ENCODE measurements at regions of chr16 and their contacts with region 1.

Region 1: GRCh38 chr16:75555707-75556430 is at the start of gene TMEM231:
- DNase-seq: peak; percentile 90 to 98 (median 96)
- ATAC-seq: peak; percentile 96 to 98 (median 97)
- H3K4me3 ChIP-seq: peak within 1 kb of the TSS; percentile 61 to 70
- H3K4me3 Mint-ChIP-seq: peak within 1 kb of the TSS; percentile 83 to 89 (median 88)
- H3K27ac ChIP-seq: peak within 1 kb of the TSS; percentile 66
- H3K27ac Mint-ChIP-seq: peak within 1 kb of the TSS; percentile 87 to 89
- H3K4me1 ChIP-seq: peaks cover 3 to 15% of the 10 kb centered on the region in 2 experiments
- H3K4me1 Mint-ChIP-seq: peaks cover 8 to 12% (median 12%) of the 10 kb centered on the region in 3 donors
- H3K27me3 ChIP-seq: peaks cover 0 to 4% of the 10 kb centered on the region in 2 experiments
- H3K27me3 Mint-ChIP-seq: peaks cover 3 to 12% of the 10 kb centered on the region in 2 donors
- total RNA-seq, gene TMEM231: 1.5 to 3.0 (median 2.1) TPM

Region 2: GRCh38 chr16:75519881-75520280 is 36.0 kb before region 1 on chr16:
- CTCF ChIA-PET with region 1: interaction called in 1 of 2 experiments, 22 read pairs
- POLR2A ChIA-PET with region 1: interaction called in 1 of 2 experiments, 4 read pairs
- DNase-seq: no peak
- ATAC-seq: no peak
- H3K4me3 ChIP-seq: no peak overlapping the region
- H3K4me3 Mint-ChIP-seq: no peak overlapping the region
- H3K27ac ChIP-seq: no peak overlapping the region
- H3K27ac Mint-ChIP-seq: no peak overlapping the region
- H3K4me1 ChIP-seq: peaks cover 0 to 14% of the 10 kb centered on the region in 2 experiments
- H3K4me1 Mint-ChIP-seq: peaks cover 11 to 13% (median 12%) of the 10 kb centered on the region in 3 donors
- H3K27me3 ChIP-seq: no peaks in the 10 kb centered on the region
- H3K27me3 Mint-ChIP-seq: no peaks in the 10 kb centered on the region

Region 3: DNA sequence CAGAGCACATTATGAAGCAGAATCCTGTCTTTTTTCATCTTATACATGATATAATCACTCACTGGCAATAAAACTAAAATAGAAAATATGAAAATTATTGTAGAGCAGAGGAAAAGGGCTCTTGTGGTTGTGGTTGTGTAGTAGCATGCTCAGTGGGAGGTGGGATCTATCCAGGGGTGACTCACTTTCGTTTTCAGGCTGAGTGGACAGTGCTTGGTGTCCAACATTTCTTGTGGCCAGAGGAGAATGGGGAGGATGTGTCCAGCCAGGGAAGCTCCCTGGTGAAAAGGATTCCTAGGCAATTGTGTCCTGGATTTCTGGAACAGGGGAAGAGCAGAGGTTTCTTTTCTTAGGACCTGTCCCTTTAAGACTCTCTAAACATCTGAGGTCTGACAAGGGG is 202.3 kb after region 1 on chr16:
- CTCF ChIA-PET with region 1: no interaction called
- POLR2A ChIA-PET with region 1: no interaction called
- DNase-seq: no peak
- ATAC-seq: no peak
- H3K4me3 ChIP-seq: no peak overlapping the region
- H3K4me3 Mint-ChIP-seq: no peak overlapping the region
- H3K27ac ChIP-seq: no peak overlapping the region
- H3K27ac Mint-ChIP-seq: no peak overlapping the region
- H3K4me1 ChIP-seq: no peaks in the 10 kb centered on the region
- H3K4me1 Mint-ChIP-seq: peaks cover 0 to 9% (median 0%) of the 10 kb centered on the region in 3 donors
- H3K27me3 ChIP-seq: peaks cover 0 to 2% of the 10 kb centered on the region in 2 experiments
- H3K27me3 Mint-ChIP-seq: peaks cover 1 to 8% of the 10 kb centered on the region in 2 donors

Measured in T-cell (primary cell).